ENCODE measurements at regions of chr4 and their contacts with region 1.

Region 1: DNA sequence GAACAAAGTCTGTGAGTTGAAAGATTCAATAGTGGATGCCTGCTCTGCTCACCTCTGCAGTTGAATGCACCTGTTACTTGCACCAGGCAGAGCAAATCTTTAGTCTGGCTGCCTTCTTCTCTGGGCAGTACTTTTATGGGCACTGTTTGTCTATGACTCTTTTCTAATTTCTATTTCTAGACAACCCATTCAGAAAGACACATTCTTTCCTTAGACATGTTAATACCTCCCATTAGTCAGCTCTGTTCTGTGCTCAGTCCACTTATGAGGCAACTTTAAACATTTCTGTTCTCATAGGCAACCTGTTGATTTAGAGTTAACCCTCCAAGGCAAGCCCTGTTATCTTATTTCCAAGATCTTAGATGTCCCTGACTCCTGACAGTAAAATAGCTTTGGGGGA is 108.9 kb downstream of the SYNPO2 start:
- DNase-seq: no peak
- H3K4me3 ChIP-seq: no peak overlapping the region
- H3K4me3 Mint-ChIP-seq: no peak overlapping the region
- H3K27ac ChIP-seq: no peak overlapping the region
- H3K27ac Mint-ChIP-seq: no peak overlapping the region
- H3K4me1 ChIP-seq: peaks cover 5% of the 10 kb centered on the region in 2 donors
- H3K4me1 Mint-ChIP-seq: peaks cover 10% of the 10 kb centered on the region
- H3K27me3 ChIP-seq: no peaks in the 10 kb centered on the region
- H3K27me3 Mint-ChIP-seq: peaks cover 0 to 3% (median 2%) of the 10 kb centered on the region in 3 donors
- CTCF ChIP-seq: no peak

Region 2: DNA sequence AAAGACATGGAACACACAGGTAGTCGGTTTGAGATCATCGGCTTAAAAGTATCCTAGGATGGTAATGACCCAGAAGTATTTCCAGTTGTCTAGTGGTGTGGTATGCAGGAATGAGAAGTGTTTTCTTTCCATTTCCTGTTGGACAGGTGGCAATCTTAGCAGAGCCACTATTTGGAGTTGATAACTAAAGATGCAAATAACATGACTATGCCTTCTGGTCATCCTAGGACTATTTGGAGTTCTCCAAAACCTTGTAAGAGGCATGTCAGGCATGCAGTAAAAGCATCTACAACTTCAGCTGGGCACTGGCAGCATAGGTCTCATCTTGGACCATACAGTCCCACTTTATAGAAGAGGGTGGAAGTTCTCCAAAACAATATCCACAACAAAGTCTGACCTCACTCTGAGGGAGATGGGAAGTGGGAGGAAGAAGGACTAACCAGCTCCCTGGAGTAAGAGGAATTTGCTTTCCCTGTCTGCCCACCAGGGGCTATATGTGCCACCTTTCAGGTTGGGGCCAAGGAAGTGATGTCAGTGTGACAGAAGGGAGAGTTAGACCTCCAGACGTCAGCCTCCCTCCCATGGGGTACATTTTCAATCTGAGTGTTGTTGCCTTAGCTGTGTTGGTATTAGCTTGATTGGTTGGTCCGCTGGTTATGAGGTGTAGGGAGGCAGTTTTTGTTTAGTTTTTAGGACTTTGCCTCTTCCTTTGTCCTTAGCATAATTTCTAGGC is 36.8 kb after region 1 on chr4:
- intact Hi-C with region 1: loop called in 1 of 2 experiments (anchors 5 kb)
- DNase-seq: no peak
- H3K4me3 ChIP-seq: no peak overlapping the region
- H3K4me3 Mint-ChIP-seq: no peak overlapping the region
- H3K27ac ChIP-seq: no peak overlapping the region
- H3K27ac Mint-ChIP-seq: no peak overlapping the region
- H3K4me1 ChIP-seq: peaks cover 15% of the 10 kb centered on the region in 2 donors
- H3K4me1 Mint-ChIP-seq: peaks cover 12% of the 10 kb centered on the region
- H3K27me3 ChIP-seq: no peaks in the 10 kb centered on the region
- H3K27me3 Mint-ChIP-seq: peaks cover 0 to 2% (median 0%) of the 10 kb centered on the region in 3 donors
- CTCF ChIP-seq: no peak

Region 3: DNA sequence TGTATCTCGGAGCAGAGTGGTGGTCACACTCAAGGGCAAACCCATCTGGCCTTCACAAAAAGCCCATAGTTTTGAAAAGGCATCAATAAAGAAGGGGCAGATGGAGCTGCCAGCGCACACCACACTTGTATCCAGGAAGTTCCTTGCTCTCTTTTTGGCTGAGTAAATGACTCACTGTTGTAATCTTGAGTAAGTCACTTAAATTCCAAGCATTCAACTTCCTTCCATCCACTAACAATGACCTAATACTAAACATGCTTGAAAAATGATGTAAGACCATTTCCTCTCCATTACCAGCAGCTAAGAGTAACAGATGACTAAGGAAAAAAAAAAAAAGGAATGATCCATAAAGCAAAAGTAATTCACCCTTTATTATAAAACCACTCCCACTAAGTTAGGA is 105.7 kb after region 1 on chr4:
- intact Hi-C with region 1: loop called in 1 of 2 experiments (anchors 10 kb)
- DNase-seq: peak; percentile 78 to 95 (median 89)
- H3K4me3 ChIP-seq: no peak overlapping the region
- H3K4me3 Mint-ChIP-seq: peak overlapping the region in 1 of 2 donors; percentile 26
- H3K27ac ChIP-seq: peak overlapping the region; percentile 22 to 58
- H3K27ac Mint-ChIP-seq: peak overlapping the region in 6 of 7 donors; percentile 79 to 94 (median 90)
- H3K4me1 ChIP-seq: peaks cover 22 to 29% of the 10 kb centered on the region in 2 donors
- H3K4me1 Mint-ChIP-seq: peaks cover 39% of the 10 kb centered on the region
- H3K27me3 ChIP-seq: no peaks in the 10 kb centered on the region
- H3K27me3 Mint-ChIP-seq: peaks cover 0 to 3% (median 3%) of the 10 kb centered on the region in 3 donors
- CTCF ChIP-seq: no peak